ENCODE measurements at regions of chr2 and their contacts with region 1.

Region 1: GRCh38 chr2:235675678-235676535 is 182.1 kb downstream of the AGAP1 start:
- DNase-seq: no peak
- H3K4me3 ChIP-seq: peak overlapping the region in 1 of 59 donors; percentile 22
- H3K27ac ChIP-seq: peak overlapping the region in 25 of 59 donors; percentile 1 to 81 (median 55)
- H3K27me3 ChIP-seq: no peaks in the 10 kb centered on the region
- CTCF ChIP-seq: peak in 17 of 56 donors; percentile 2 to 33 (median 18)

Region 2: GRCh38 chr2:235716899-235717442 is 41.1 kb after region 1 on chr2:
- intact Hi-C with region 1: loop called (anchors 5 kb)
- DNase-seq: no peak
- H3K4me3 ChIP-seq: peak overlapping the region in 15 of 59 donors; percentile 0 to 33 (median 11)
- H3K27ac ChIP-seq: peak overlapping the region in 56 of 59 donors; percentile 6 to 93 (median 84)
- H3K27me3 ChIP-seq: no peaks in the 10 kb centered on the region
- CTCF ChIP-seq: no peak